CD4-positive, alpha-beta memory T cell (primary cell): ENCODE measurements at regions of chr2 and their contacts with region 1.

Region 1: DNA sequence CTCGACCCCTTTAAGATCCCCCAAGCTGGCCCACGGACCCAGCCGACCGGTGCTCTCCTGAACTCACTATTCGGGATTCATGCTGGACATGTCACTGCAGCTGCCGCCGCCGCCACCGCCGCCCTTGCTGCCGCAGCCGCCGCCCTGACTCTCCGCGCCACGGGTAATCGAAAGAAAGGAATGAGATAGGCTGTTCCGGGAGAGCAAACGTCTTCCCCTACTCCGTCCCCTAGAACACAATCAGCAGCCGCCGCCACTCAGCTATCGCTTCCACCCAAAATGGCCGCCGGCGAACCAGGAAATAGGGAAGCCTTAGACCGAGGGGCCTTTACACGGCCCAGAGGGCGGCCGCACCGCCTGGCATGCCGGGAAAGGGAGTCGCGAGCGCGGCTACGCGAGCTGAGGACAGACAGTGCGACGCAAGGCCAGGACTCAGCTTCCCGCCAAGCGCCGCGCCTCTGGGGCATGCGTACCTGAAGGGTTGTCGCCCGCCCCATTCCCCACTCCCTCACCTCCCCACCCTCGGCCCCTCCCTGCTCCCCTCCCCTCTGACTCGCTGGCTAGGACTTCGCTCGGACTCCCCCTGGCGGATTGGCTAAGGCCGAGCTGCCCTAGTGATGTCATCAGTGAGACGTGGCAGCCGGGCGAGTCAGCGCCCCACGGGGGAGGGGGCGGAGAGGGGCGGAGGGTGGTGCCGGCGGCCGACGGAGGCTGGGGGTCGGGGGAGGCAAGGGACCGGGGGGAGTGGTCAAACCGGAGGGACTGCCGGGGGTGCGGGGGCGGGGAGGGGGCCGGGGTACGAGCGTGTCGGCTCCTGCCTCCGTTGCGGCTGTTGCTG is at the start of gene RAB1A:
- DNase-seq: peak; percentile 95 to 100 (median 99)
- H3K4me3 ChIP-seq: peak within 1 kb of the TSS; percentile 74 to 94
- H3K4me3 Mint-ChIP-seq: peak within 1 kb of the TSS; percentile 97 to 100 (median 99)
- H3K27ac ChIP-seq: peak within 1 kb of the TSS; percentile 97
- H3K27ac Mint-ChIP-seq: peak within 1 kb of the TSS; percentile 94 to 100 (median 99)
- H3K4me1 ChIP-seq: peaks cover 45% of the 10 kb centered on the region
- H3K4me1 Mint-ChIP-seq: peaks cover 20 to 51% (median 28%) of the 10 kb centered on the region in 4 donors
- H3K27me3 ChIP-seq: no peaks in the 10 kb centered on the region
- H3K27me3 Mint-ChIP-seq: no peaks in the 10 kb centered on the region
- total RNA-seq, gene RAB1A: 53.3 to 58.4 TPM

Region 2: DNA sequence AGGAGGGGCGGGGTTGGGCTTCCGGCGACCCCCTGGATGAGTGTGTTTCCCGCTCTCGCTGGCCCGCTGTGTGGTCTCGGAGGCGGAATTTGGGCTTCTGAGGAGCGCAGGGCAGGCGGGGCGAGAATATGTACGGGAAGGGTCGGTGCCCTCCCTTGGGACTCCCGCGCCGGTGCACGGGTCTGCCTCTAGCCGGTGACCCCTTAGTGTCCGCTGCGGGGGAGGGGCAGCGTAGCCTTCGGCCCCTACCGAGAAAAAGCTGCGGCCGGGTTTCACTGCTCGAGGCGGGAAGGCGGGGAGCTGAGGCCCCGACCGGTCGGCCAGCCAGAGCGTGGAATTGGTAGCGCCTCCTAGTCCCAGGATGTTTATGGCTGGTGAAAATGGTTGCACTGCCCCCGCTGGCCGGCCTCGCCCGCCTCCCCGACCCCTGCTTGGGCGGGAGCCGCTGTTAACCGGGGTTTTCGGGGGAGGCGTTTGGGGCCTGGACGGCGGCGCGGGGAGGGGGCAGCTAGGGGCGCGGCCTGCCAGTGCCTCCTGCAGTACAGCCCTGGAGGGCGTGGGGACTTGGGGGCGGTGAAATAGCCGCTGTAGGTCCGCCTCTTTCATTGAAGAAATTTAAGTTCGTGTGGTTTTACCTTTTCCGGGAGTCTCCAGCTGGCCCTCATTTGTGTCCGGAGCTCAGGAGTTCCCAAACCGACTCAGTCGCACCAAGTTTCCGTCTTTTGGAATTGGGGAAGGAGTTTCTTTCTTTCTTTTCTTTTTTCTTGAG is 1288.6 kb before region 1 on chr2 and contains the start of gene UGP2:
- CTCF ChIA-PET with region 1: no interaction called
- POLR2A ChIA-PET with region 1: no interaction called
- intact Hi-C with region 1: loop called (anchors 1 kb)
- DNase-seq: peak; percentile 82 to 94 (median 83)
- H3K4me3 ChIP-seq: peak within 1 kb of the TSS; percentile 63 to 85
- H3K4me3 Mint-ChIP-seq: peak within 1 kb of the TSS; percentile 96 to 100 (median 98)
- H3K27ac ChIP-seq: peak within 1 kb of the TSS; percentile 71
- H3K27ac Mint-ChIP-seq: peak within 1 kb of the TSS; percentile 95 to 100 (median 97)
- H3K4me1 ChIP-seq: peaks cover 44% of the 10 kb centered on the region
- H3K4me1 Mint-ChIP-seq: peaks cover 38 to 63% (median 51%) of the 10 kb centered on the region in 4 donors
- H3K27me3 ChIP-seq: no peaks in the 10 kb centered on the region
- H3K27me3 Mint-ChIP-seq: no peaks in the 10 kb centered on the region
- total RNA-seq, gene UGP2: 77.6 to 92.7 TPM

Region 3: GRCh38 chr2:65064728-65065552 is 65.1 kb before region 1 on chr2:
- CTCF ChIA-PET with region 1: interaction called, 22 read pairs
- POLR2A ChIA-PET with region 1: interaction called, 85 read pairs
- intact Hi-C with region 1: loop called (anchors 1 kb)
- DNase-seq: peak; percentile 55 to 63 (median 57)
- H3K4me3 ChIP-seq: no peak overlapping the region
- H3K4me3 Mint-ChIP-seq: peak overlapping the region in 3 of 8 donors; percentile 29 to 35 (median 31)
- H3K27ac ChIP-seq: no peak overlapping the region
- H3K27ac Mint-ChIP-seq: peak overlapping the region in 6 of 7 donors; percentile 2 to 66 (median 22)
- H3K4me1 ChIP-seq: peaks cover 44% of the 10 kb centered on the region
- H3K4me1 Mint-ChIP-seq: peaks cover 20 to 76% (median 38%) of the 10 kb centered on the region in 4 donors
- H3K27me3 ChIP-seq: no peaks in the 10 kb centered on the region
- H3K27me3 Mint-ChIP-seq: no peaks in the 10 kb centered on the region

Region 4: GRCh38 chr2:65169760-65170136 is 39.7 kb after region 1 on chr2:
- CTCF ChIA-PET with region 1: interaction called, 10 read pairs
- POLR2A ChIA-PET with region 1: no interaction called
- intact Hi-C with region 1: no loop called
- DNase-seq: no peak
- H3K4me3 ChIP-seq: no peak overlapping the region
- H3K4me3 Mint-ChIP-seq: no peak overlapping the region
- H3K27ac ChIP-seq: no peak overlapping the region
- H3K27ac Mint-ChIP-seq: no peak overlapping the region
- H3K4me1 ChIP-seq: no peaks in the 10 kb centered on the region
- H3K4me1 Mint-ChIP-seq: no peaks in the 10 kb centered on the region
- H3K27me3 ChIP-seq: no peaks in the 10 kb centered on the region
- H3K27me3 Mint-ChIP-seq: no peaks in the 10 kb centered on the region

Region 5: DNA sequence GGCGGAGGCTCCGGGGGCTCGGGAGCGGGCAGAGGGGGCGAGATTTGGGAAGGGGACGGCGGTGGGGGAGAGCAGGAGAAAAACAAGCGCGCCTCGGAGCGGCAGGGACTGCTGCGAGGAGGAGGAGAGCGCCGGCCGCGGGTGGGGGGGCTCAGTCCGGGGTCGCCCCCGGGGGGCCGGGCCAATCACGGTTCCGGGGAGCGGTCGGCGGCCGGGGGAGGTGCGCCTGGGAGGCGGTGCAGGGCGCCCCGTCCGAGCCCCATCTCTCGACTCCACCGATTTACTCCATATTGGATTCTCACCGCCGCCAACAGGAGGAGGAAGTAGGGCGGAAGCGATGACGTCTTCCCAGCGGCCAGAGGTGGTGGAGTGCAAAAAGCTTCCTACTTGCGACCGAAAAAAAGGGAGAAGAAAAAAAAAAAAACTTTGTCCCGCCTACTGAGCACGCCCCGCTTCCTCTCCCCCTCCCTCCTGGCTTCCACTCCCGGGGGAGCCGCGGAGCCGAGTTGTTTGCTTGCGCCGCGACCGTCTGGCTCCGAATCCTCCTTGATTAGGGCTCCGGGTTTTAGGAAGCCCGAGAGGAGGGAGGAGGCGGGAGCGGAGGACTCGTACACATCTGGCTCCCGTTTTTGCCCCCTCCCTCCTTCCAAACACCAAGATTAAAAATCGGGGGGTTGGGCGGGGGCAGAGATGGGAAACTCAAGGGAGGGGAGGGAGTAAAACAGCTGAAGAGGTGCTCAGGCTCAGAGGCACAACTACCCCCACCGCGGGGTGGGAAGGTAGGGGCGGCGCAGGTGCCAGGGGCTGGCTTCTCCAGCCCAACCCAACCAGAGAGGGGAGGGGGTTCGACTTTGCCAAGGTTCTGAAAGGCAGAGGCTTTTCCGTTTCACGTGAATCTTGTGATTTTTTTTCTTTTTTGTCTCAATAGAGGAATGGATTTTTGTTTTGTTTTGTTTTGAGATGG is 302.5 kb after region 1 on chr2 and contains the start of gene SPRED2:
- CTCF ChIA-PET with region 1: no interaction called
- POLR2A ChIA-PET with region 1: no interaction called
- intact Hi-C with region 1: loop called (anchors 5 kb)
- DNase-seq: peak; percentile 64 to 86 (median 67)
- H3K4me3 ChIP-seq: peak within 1 kb of the TSS; percentile 39 to 62
- H3K4me3 Mint-ChIP-seq: peak within 1 kb of the TSS; percentile 90 to 97 (median 91)
- H3K27ac ChIP-seq: peak within 1 kb of the TSS; percentile 34
- H3K27ac Mint-ChIP-seq: peak within 1 kb of the TSS; percentile 78 to 93 (median 87)
- H3K4me1 ChIP-seq: peaks cover 30% of the 10 kb centered on the region
- H3K4me1 Mint-ChIP-seq: peaks cover 10 to 40% (median 14%) of the 10 kb centered on the region in 4 donors
- H3K27me3 ChIP-seq: peaks cover 10% of the 10 kb centered on the region
- H3K27me3 Mint-ChIP-seq: peaks cover 11 to 29% of the 10 kb centered on the region in 2 donors
- total RNA-seq, gene SPRED2: 0.52 to 0.72 TPM